ENCODE measurements at regions of chr21 and their contacts with region 1.

Region 1: GRCh38 chr21:31781737-31782136 is 49.8 kb upstream of the SCAF4 start:
- DNase-seq: peak; percentile 26 to 34
- H3K4me3 ChIP-seq: no peak overlapping the region
- H3K27ac ChIP-seq: no peak overlapping the region
- H3K4me1 ChIP-seq: peaks cover 4 to 7% of the 10 kb centered on the region in 2 donors
- H3K27me3 ChIP-seq: no peaks in the 10 kb centered on the region
- CTCF ChIP-seq: no peak
- POLR2A ChIP-seq: no peak

Region 2: DNA sequence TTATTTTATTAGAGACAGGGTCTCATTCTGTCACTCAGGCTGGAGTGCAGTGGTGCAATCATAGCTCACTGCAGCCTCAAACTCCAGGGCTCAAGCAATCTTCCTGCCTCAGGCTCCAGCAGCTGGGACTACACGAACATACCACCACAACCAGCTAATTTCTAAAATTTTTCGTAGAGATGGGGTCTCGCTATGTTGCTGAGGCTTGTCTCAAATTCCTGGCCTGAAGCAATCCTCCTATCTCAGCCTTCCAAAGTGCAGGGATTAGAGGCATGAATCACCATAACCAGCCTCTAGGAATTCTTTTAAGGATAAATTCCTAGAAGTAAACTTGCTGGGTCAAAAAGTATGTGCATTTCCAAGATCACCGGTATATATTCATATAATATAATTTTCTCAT is 73.4 kb after region 1 on chr21:
- intact Hi-C with region 1: no loop called
- DNase-seq: no peak
- H3K4me3 ChIP-seq: no peak overlapping the region
- H3K27ac ChIP-seq: no peak overlapping the region
- H3K4me1 ChIP-seq: no peaks in the 10 kb centered on the region
- H3K27me3 ChIP-seq: no peaks in the 10 kb centered on the region
- CTCF ChIP-seq: no peak
- POLR2A ChIP-seq: no peak

Region 3: DNA sequence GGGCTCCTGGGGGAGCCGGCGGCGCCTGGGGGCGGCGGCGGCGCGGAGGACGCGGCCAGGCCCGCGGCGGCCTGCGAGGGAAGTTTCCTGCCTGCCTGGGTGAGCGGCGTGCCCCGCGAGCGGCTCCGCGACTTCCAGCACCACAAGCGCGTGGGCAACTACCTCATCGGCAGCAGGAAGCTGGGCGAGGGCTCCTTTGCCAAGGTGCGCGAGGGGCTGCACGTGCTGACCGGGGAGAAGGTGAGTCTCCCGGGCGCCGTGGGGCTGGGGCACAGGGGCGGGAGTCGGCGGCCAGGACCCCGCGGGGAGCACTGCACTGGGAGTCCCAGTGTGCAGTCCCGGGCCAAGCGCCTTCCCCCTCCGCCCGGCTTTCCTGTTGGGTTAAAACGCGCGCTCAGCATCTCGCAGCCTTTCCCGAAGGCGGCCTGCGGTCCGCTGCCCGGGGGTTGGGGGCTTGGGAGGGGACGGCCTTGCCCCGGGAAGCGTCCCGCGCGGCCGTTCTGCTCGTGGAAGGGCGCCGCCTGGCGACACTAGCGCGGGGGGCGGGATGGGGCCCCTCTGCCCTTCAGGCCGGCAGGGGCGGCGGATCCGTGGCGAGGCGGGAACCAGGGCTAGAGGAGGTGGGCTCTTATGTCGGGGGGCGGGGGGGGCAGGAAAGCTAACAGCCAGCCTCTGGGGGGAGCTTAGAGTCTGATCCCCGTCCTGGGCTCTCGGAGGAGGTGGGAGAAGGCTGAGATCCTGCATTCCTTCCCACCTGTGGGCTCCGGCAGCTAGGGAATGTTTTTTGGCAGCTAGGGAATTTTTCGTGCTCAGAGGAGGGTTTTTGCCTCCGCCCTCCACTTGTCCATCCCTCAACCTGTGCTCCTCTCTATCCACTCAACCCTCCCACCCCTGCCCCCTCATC is 92.2 kb after region 1 on chr21:
- intact Hi-C with region 1: loop called (anchors 10 kb)
- DNase-seq: peak; percentile 12 to 22
- H3K4me3 ChIP-seq: peak overlapping the region in 1 of 3 donors; percentile 52
- H3K27ac ChIP-seq: no peak overlapping the region
- H3K4me1 ChIP-seq: peaks cover 13 to 19% of the 10 kb centered on the region in 2 donors
- H3K27me3 ChIP-seq: no peaks in the 10 kb centered on the region
- CTCF ChIP-seq: peak in 5 of 6 experiments; percentile 13 to 56 (median 31)
- POLR2A ChIP-seq: no peak

Region 4: GRCh38 chr21:32257962-32258785 is 476.4 kb after region 1 on chr21:
- intact Hi-C with region 1: loop called (anchors 10 kb)
- DNase-seq: peak; percentile 74 to 83
- H3K4me3 ChIP-seq: no peak overlapping the region
- H3K27ac ChIP-seq: no peak overlapping the region
- H3K4me1 ChIP-seq: peaks cover 8 to 14% of the 10 kb centered on the region in 2 donors
- H3K27me3 ChIP-seq: no peaks in the 10 kb centered on the region
- CTCF ChIP-seq: peak; percentile 37 to 89 (median 72)
- POLR2A ChIP-seq: no peak